ENCODE measurements at regions of chr11 and their contacts with region 1.

Region 1: GRCh38 chr11:61361686-61362541 is at the starts of genes CYB561A3 and TMEM138:
- DNase-seq: peak; percentile 84
- ATAC-seq: peak; percentile 76
- H3K4me3 Mint-ChIP-seq: peak within 1 kb of the TSS; percentile 100
- H3K27ac Mint-ChIP-seq: peak within 1 kb of the TSS; percentile 98
- H3K4me1 Mint-ChIP-seq: peaks cover 59% of the 10 kb centered on the region
- H3K27me3 Mint-ChIP-seq: no peaks in the 10 kb centered on the region
- CTCF ChIP-seq: no peak
- total RNA-seq, gene CYB561A3: 397 and 433 TPM in 2 replicates
- total RNA-seq, gene TMEM138: 69.7 and 81.2 TPM in 2 replicates

Region 2: DNA sequence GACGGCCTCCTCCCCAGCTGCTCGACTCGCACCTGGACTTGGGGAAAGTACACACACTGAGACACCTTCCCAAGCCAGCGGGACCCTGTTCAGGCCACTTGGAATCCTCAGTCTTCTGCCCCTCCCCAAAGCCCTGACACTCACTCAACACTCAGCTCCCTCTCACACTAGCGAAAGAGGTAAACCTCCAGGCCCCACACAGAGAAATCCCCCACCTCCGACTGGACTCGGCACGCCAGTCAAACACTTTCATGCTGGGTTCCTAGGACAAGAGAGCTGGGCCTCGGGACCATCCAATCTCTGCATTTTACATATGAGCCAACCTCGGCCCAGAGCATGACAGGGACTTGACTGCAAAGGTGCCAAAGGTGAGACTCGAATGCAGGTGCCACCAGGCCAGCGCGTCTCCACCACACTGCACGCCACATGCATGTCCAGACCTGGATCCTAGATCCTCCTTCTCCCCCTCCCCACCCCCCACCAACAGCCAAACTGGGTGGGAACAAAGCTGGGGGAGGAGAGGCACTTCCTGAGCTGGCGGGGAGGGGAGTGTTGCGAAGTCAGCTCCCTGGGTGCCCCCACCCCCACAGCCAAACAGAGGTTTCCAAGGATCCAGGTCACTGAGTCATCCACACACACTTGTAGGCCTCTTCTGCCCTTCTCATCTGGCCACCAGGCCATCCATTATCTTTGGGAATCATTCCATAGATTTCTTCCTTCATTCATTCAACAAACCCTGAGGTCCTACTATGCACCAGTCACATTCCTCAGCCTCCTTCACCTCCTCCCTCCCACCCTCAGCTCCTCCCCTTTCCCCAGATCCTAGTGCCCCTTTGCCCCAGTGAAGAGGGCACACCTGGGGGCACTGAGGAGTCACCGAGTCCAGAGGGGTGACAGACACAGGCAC is 270.3 kb before region 1 on chr11:
- CTCF ChIA-PET with region 1: no interaction called
- POLR2A ChIA-PET with region 1: no interaction called
- intact Hi-C with region 1: loop called (anchors 5 kb)
- DNase-seq: no peak
- ATAC-seq: peak; percentile 14
- H3K4me3 Mint-ChIP-seq: peak overlapping the region; percentile 77
- H3K27ac Mint-ChIP-seq: peak overlapping the region; percentile 86
- H3K4me1 Mint-ChIP-seq: peaks cover 78% of the 10 kb centered on the region
- H3K27me3 Mint-ChIP-seq: no peaks in the 10 kb centered on the region
- CTCF ChIP-seq: no peak

Region 3: DNA sequence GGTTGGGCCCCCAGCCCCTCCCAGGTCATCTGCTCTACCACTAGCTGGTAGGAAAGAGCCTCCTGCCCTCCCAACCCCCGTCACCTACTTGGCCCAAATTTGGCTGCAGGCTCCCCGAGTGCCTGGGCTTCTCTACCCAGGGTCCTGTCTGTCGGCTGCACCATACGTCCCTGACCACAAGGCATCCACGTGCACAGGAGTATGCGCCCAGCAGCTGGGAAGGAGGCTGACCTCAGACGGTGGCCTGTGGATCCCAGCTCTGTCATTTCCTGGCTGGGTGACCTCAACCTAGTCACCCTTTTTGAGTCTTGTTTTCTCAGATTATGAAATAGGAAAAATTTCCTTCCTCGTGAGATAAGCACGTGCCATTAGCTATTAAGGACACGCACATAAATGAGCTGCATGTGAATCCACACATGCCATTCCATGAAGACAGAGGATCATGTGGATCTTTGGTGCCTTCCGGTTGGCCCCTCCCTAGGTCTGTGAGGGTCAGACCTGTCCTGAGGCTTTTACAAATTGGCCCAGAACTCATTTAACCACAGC is 13.9 kb before region 1 on chr11:
- CTCF ChIA-PET with region 1: no interaction called
- POLR2A ChIA-PET with region 1: interaction called, 76 read pairs
- intact Hi-C with region 1: loop called (anchors 1 kb)
- DNase-seq: no peak
- ATAC-seq: no peak
- H3K4me3 Mint-ChIP-seq: no peak overlapping the region
- H3K27ac Mint-ChIP-seq: peak overlapping the region; percentile 77
- H3K4me1 Mint-ChIP-seq: peaks cover 33% of the 10 kb centered on the region
- H3K27me3 Mint-ChIP-seq: no peaks in the 10 kb centered on the region
- CTCF ChIP-seq: no peak

Region 4: GRCh38 chr11:61392981-61393595 is 31.2 kb after region 1 on chr11:
- CTCF ChIA-PET with region 1: interaction called, 7 read pairs
- POLR2A ChIA-PET with region 1: interaction called, 50 read pairs
- intact Hi-C with region 1: loop called (anchors 2 kb)
- DNase-seq: no peak
- ATAC-seq: peak; percentile 42
- H3K4me3 Mint-ChIP-seq: peak overlapping the region; percentile 97
- H3K27ac Mint-ChIP-seq: peak overlapping the region; percentile 96
- H3K4me1 Mint-ChIP-seq: peaks cover 26% of the 10 kb centered on the region
- H3K27me3 Mint-ChIP-seq: no peaks in the 10 kb centered on the region
- CTCF ChIP-seq: no peak